PC-3 (cell line): ENCODE measurements at regions of chr11 and their contacts with region 1.

Region 1: GRCh38 chr11:73931039-73931645 is 19.7 kb upstream of the DNAJB13 start:
- DNase-seq: peak; percentile 85
- ATAC-seq: peak; percentile 75
- H3K4me3 ChIP-seq: no peak overlapping the region
- H3K27ac ChIP-seq: peak overlapping the region; percentile 40
- H3K4me1 ChIP-seq: peaks cover 20% of the 10 kb centered on the region
- H3K27me3 ChIP-seq: no peaks in the 10 kb centered on the region
- CTCF ChIP-seq: peak; percentile 76

Region 2: DNA sequence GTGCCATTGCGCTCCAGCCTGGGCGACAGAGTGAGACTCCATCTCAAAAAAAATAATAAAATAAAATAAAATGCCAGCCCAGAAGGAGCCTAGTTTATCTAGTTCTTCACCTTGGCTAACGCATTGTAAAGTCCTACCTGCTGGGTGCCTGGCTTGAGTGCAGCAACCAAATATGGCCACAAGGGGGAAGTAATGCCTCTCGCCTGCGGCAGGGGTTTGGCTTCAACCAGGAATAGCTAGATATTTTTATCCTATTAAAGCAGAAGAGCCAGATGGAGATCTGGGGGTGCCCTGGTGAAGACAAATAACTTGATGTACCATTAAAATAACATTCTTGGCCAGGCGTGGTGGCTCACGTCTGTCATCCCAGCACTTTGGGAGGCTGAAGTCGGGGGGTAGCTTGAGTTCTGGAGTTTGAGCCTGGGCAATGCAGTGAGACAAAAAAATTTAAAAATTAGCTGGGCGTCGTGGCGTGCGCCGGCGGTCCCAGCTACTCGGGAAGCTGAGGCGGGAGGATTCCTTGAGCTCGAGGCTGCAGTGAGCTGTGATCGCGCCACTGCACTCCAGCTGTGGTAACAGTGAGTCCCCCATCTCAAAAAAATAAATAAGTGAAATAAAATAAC is 305.3 kb before region 1 on chr11:
- CTCF ChIA-PET with region 1: interaction called, 13 read pairs
- POLR2A ChIA-PET with region 1: no interaction called
- intact Hi-C with region 1: no loop called
- DNase-seq: peak; percentile 93
- ATAC-seq: peak; percentile 93
- H3K4me3 ChIP-seq: peak overlapping the region; percentile 59
- H3K27ac ChIP-seq: no peak overlapping the region
- H3K4me1 ChIP-seq: peaks cover 5% of the 10 kb centered on the region; the same call in 1 of the 2 replicates
- H3K27me3 ChIP-seq: no peaks in the 10 kb centered on the region
- CTCF ChIP-seq: peak; percentile 92

Region 3: DNA sequence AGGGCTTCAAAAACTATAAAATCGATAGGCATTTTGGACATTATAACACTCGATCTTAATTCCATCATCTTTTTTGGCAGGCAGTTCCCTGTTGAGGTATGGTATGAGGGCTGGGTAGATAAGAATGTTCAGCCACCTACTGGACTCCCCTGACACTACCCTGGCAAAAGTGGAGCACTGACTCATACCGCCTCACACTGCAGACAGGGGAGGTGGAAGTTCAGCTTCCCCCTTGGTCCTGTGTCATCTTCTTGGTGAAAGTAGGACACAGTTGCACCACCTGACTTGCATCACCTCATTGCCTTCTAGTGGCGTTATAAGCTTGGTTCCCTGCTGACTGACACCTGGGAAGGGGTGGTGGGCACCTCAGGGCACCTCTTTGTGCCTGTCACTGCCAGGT is 24.0 kb before region 1 on chr11:
- CTCF ChIA-PET with region 1: interaction called, 10 read pairs
- POLR2A ChIA-PET with region 1: interaction called, 21 read pairs
- intact Hi-C with region 1: no loop called
- DNase-seq: peak; percentile 88
- ATAC-seq: peak; percentile 100
- H3K4me3 ChIP-seq: no peak overlapping the region
- H3K27ac ChIP-seq: no peak overlapping the region
- H3K4me1 ChIP-seq: peaks cover 10% of the 10 kb centered on the region
- H3K27me3 ChIP-seq: no peaks in the 10 kb centered on the region
- CTCF ChIP-seq: peak; percentile 74

Region 4: DNA sequence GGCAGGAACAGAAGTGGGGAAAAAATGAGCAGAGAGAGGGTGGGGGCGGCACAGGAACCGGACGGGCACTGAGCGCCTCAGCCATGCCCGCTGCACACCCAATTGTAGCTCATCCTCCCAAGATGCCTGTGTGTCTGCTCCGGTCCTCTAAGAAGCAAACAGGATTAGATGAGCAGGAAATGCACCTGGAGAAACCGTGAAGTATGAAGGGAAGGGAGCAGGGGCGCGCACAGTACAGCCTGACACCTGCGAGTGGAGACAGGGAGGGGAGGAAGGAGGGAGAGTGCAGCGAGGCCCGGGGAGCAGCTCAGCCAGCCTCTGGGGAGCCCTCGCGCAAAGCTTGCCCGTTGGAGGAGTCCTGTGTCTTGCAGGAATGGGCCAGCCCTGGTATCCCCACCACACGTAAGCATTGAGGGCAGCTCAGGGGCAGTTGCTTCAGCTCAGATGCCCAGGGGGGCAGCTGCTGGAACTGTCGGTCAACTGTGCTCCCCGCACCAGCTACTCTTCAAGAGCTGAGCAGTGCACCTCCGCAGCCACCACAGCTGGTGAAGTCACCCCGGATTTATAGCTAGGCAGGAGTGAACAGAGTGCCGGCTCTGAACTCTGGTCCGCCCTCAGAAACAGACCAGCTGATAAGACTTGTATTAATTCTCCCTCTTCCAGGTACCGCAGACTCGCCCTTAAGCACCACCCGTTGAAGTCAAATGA is 26.7 kb after region 1 on chr11:
- CTCF ChIA-PET with region 1: no interaction called
- POLR2A ChIA-PET with region 1: no interaction called
- intact Hi-C with region 1: no loop called
- DNase-seq: no peak
- ATAC-seq: no peak
- H3K4me3 ChIP-seq: no peak overlapping the region
- H3K27ac ChIP-seq: no peak overlapping the region
- H3K4me1 ChIP-seq: peaks cover 8% of the 10 kb centered on the region
- H3K27me3 ChIP-seq: no peaks in the 10 kb centered on the region
- CTCF ChIP-seq: no peak